Breast epithelium (tissue), 4 donors: ENCODE measurements at regions of chr18 and their contacts with region 1.

Region 1: DNA sequence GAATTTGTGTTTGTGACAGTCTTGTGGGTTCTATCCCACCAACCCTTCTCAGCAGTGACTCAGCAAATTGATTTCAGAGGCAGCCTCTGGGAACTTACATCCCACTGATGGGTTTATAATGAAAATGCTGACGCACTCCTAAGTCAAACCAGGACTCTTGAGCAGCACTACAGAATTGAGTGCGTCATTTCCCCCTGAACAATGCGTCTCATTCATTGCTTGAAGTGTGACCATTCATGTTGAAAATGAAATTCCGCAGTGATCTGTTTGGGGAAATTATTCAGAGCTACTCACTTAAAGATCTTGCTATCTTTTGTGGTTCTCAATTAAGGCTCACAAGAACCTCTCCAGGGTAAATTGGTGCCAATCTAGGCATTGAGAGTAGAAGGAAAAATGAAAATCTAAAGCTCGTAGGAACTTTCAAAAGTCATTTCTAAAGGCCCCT is 417.7 kb upstream of the SLC14A2 start:
- DNase-seq: no peak
- H3K4me3 ChIP-seq: no peak overlapping the region
- H3K27ac ChIP-seq: no peak overlapping the region
- H3K4me1 ChIP-seq: no peaks in the 10 kb centered on the region
- H3K27me3 ChIP-seq: no peaks in the 10 kb centered on the region
- CTCF ChIP-seq: no peak
- POLR2A ChIP-seq: no peak

Region 2: DNA sequence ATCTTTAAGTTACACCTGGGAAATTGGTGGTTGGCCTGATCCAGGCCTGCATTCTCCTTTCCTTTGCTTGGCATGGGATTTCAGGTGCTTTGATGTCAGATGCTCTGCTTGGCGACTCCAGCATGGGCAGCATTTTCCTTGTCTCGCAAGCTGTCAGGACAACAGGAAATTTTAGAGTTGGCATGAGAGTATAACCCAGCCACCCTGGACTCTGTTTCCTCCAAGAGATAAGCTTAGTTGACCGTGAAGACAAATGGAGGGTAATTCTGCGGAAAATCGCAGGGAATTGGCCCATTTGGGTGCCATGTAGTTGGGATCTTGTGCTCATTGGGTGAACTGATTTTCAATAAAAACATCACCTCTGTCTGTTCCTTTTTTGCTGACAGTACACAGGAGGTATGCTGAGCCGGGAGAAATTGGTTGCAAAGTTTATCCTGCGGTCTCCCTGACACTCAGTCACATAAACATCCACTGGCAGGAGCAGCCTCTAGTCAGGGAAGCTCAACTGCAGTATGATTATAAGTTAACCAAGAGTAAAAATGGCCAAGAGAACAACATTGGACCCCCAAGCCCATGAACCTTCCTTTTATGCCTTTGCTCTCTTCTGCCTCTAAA is 106.9 kb before region 1 on chr18:
- intact Hi-C with region 1: loop called (anchors 10 kb)
- DNase-seq: no peak
- H3K4me3 ChIP-seq: no peak overlapping the region
- H3K27ac ChIP-seq: no peak overlapping the region
- H3K4me1 ChIP-seq: no peaks in the 10 kb centered on the region
- H3K27me3 ChIP-seq: no peaks in the 10 kb centered on the region
- CTCF ChIP-seq: no peak
- POLR2A ChIP-seq: no peak